BJ (cell line): ENCODE measurements at regions of chr11 and their contacts with region 1.

Region 1: DNA sequence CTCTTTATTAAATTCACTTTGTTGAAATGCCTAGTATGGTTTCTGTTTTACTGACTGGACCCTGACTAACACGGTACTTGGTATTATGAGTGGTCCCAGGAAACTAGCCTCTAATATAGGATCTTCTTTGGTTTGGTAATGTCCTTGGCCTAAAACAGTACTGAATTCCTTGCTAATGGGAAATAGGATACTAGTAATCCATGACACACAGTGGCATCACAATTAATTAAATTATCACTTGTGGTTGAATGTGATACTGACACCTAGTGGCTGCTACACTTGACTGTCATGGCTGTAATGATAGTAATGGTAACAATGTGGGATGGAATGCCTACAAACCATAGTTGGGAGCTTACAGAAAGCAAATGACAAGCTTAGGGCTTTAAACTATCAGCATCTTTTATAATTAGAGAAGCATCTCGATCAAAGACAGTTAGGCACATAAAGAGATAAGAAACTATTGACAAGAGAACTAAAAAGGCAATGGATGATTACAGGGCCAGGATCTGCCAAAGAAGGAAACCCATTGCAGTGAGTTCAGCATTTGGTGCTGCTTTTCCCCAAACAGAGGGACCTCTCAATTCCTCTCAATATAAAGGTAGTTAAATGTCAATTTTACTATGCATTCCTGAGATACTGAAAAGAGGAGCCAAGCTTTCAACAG is 8.6 kb downstream of the DNHD1 start:
- DNase-seq: peak; percentile 27
- H3K4me3 ChIP-seq: no peak overlapping the region
- H3K27me3 ChIP-seq: no peaks in the 10 kb centered on the region
- CTCF ChIP-seq: peak; percentile 66

Region 2: GRCh38 chr11:6523253-6523652 is 17.5 kb after region 1 on chr11:
- CTCF ChIA-PET with region 1: interaction called, 15 read pairs
- POLR2A ChIA-PET with region 1: no interaction called
- DNase-seq: no peak
- H3K4me3 ChIP-seq: no peak overlapping the region
- H3K27me3 ChIP-seq: no peaks in the 10 kb centered on the region
- CTCF ChIP-seq: no peak

Region 3: DNA sequence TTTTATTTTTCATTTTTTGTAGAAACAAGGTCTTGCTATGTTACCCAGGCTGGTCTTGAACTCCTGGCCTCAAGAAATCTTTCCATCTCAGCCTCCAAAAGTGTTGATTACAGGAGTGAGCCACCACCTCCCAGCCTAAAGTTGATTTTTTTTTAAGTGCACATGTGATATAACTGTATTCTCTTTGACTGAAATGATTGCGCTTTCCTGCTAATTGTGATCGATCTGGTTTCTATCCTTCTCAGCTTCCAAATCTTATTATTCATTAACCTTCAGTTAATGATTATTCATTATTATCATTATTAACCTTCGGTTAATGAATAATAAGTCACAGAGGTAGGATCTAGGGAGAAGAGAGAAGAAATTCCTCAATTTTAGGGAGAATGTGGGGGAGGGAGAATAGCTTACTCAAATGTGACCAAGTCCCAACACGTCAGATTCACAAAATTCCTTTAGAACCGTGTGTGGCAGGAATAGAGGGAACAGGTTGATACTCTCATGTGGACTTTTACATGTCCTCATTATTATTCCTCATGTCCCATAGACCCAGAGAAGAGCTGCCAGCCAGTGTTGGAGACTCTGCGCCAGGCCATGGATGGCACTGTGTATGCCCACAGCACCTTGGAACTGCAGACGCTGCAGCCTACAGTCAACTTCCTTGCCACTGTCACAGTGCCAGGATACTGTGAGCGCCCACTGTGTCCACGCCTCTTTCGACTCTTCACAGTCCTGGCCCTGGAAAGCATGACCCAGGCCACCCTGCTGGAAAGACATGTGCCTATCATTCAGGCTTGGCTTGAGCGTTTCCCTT is 50.6 kb after region 1 on chr11:
- CTCF ChIA-PET with region 1: no interaction called
- POLR2A ChIA-PET with region 1: no interaction called
- DNase-seq: no peak
- H3K4me3 ChIP-seq: no peak overlapping the region
- H3K27me3 ChIP-seq: no peaks in the 10 kb centered on the region
- CTCF ChIP-seq: no peak